ENCODE measurements at regions of chr20 and their contacts with region 1.

Region 1: DNA sequence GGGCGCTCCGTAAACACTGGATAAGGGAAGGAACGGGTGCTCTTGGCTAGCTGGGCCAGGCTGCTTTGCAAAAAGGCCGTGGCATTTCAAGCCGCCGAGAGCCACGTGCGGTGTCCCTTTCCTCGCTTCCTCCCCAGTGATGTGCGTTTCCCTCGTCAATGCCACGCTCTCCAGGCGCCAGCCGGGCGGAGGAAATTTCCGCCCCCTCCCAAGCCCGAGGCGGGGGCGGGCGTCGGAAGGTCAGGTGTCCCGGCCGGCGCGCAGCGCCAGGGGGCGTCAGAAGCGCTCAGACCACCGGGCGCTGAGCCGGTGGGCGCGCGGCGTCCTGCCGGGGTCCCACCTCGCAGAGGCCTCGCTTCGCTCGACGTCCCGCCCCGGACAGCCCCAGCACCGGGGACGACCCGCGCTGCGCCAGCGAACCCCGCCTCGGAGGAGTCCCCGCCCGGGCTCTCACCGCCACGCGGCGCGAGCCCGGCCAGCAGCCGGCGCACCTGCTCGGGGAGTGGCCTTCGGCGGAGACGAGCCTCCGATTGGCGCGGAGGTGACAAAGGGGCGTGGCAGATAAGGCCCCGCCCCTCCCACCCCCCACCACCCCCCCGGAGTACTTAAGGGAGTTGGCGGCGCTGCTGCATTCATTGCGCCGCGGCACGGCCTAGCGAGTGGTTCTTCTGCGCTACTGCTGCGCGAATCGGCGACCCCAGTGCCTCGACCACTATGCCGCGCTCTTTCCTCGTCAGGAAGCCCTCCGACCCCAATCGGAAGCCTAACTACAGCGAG is at the start of gene SNAI1:
- ATAC-seq: peak; percentile 50 to 91 (median 89)
- H3K4me3 ChIP-seq: peak within 1 kb of the TSS; percentile 35 to 50 (median 46)
- H3K27ac ChIP-seq: peak within 1 kb of the TSS in 1 of 2 donors; percentile 40
- H3K4me1 ChIP-seq: peaks cover 4 to 20% of the 10 kb centered on the region in 2 donors
- total RNA-seq, gene SNAI1: 0.66 to 5.2 (median 1.9) TPM

Region 2: GRCh38 chr20:50061742-50062516 is 79.4 kb after region 1 on chr20:
- in situ Hi-C with region 1: loop called in 2 of 9 experiments (anchors 5 to 10 kb)
- ATAC-seq: no peak
- H3K4me3 ChIP-seq: no peak overlapping the region
- H3K27ac ChIP-seq: no peak overlapping the region
- H3K4me1 ChIP-seq: peaks cover 3 to 10% of the 10 kb centered on the region in 2 donors

Region 3: DNA sequence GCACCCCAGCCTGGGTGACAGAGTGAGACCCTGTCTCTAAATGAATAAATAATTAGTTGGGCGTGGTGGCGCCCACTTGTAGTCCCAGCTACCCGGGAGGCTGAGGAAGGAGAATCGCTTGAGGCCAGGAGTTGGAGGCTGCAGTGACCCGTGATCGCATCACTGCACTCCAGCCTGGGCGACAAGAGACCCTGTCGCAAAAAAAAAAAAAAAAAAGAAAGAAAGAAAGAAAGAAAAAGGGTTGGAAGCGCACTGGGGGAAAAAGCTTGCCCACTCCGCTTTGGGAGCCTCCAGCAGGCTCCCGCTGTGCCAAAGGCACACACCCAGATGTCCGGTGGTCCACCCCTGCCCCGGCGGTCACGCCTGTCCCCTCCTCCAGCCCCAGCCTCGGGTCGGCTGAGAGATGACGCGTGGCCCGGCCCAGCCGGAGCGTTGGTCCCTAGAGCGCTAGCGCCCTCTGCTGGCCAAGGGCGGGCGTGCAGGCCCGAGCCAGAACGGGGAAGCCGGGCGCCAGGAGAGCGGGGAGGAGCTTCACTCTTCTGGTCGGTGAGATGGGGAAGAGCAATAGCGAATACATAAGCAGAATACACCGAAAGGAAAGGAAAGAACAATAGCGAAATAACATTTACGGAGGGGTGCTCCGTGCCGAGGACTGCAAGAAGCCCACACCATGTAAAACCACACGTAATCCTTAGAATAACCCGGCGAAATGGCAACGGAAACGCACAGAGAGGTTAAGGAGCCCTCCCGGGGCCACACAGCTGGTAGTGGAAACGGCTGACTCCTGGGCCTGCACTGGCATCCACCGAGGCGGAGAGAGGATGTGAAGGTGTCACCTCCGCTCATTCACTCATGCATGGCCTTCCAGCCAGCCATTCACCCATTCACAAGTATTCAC is 88.7 kb after region 1 on chr20:
- in situ Hi-C with region 1: loop called in 5 of 9 experiments (anchors 5 to 10 kb)
- ATAC-seq: peak; percentile 96 to 98 (median 96)
- H3K4me3 ChIP-seq: peak overlapping the region; percentile 21 to 39 (median 29)
- H3K27ac ChIP-seq: no peak overlapping the region
- H3K4me1 ChIP-seq: peaks cover 4 to 8% of the 10 kb centered on the region in 2 donors

Region 4: DNA sequence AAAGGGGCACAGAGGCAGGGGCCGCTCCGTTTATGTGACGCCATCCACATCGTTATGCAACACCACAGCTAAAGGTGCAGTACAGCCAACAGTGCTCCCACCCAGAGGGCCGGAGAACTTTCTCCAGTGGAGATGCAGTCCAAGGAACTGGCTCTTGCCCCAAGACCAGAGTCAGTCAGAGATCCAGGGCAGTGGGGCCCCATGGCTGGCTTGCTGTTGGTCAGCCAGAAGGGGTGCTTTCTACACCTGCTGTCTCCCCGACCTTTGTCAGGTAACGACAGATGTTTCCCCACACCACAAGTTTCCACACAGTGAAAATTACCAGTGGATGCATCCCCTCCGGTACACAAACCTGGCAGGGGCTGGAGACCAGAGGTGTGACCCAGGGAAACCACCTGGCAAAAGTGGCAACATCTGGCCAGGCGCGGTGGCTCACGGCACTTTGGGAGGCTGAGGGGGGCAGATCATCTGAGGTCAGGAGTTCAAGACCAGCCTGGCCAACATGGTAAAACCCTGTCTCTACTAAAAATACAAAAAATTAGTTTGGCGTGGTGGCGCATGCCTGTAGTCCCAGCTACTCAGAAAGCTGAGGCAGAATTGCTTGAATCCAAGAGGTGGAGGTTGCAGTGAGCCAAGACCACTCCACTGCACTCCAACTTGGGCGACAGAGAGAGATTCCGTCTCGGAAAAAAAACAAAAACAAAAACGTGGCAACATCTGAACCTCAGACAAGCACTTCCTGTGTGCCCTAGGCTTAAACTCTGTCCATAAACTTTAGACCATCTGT is 95.5 kb after region 1 on chr20:
- in situ Hi-C with region 1: loop called in 4 of 9 experiments (anchors 5 to 10 kb)
- ATAC-seq: peak in 1 of 8 experiments; percentile 12
- H3K4me3 ChIP-seq: no peak overlapping the region
- H3K27ac ChIP-seq: no peak overlapping the region
- H3K4me1 ChIP-seq: peaks cover 4 to 5% of the 10 kb centered on the region in 2 donors

Region 5: DNA sequence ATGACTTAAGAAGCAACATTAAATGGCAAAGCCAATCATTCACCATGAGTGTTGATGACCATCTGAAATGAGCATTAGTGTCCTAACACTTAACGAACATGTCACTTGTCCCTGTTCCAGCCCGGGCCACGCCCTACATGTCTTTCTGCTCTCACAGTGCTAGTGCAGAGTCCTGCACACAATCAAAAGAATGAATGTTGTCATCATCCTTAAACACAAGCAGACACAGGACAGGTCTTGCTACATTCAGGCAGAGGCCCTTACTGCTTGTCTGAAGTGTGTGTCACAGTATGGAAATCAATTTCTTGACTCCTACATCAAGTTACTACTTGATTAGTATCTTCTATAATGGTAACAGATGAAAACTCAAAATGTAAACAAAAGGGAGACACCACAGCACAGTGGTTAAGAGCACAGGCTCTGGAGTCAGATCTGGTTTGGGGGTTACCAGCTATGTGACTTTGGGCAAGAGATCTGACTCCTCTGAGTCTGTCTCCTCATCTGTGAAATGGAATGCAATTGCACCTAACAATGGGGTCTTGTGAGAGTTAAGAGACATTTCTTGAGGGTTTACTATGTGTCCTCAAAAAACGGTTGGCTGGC is 113.0 kb after region 1 on chr20:
- in situ Hi-C with region 1: no loop called
- ATAC-seq: no peak
- H3K4me3 ChIP-seq: no peak overlapping the region
- H3K27ac ChIP-seq: no peak overlapping the region
- H3K4me1 ChIP-seq: no peaks in the 10 kb centered on the region

Region 6: DNA sequence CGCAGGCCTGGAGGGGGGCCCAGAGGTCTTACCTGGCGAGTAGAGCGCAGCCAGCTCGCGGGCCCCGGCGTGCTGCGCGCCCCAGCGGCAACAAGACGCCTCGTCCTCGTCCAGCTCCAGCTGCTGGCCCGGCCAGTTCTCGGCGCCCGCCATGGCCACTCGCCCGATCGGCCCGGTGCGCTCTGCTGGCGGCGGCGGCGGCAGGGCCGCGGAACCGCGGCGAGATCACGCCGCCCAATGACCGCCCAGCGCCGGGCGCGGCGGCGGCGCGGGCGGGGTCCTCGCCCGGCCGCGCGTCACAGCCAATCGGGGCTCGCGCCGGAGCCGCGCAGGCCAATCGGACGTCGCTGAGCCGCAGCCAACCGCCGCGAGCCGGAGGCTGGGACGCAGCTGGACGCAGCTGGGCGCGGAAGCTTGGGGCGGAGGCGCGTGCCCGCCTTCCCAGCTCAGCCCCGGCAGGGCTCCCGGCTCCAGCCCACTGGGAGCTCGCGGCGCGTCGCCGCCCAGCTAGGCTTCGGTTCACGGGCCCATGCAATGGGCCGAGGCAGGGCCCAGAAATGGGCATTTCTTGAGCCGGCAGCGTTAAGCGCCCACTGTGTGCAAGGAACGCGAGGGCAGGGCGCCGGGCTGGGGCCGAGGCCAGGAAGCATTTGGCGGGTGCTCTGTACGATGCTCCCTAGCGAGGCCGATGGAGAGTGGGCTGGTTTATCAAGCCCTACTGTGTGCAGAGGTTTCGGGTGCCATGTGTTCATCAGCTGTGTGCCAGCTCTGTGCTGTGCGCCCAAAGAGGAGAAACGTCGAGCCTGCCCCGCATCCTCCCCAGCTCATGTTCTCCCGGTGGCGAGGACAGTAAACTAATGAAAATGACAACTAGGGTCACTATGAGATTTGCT is 171.2 kb after region 1 on chr20 and contains the start of gene PEDS1:
- in situ Hi-C with region 1: loop called in 1 of 9 experiments (anchors 25 kb)
- ATAC-seq: peak; percentile 88 to 98 (median 96)
- H3K4me3 ChIP-seq: peak within 1 kb of the TSS; percentile 70 to 97 (median 92)
- H3K27ac ChIP-seq: peak within 1 kb of the TSS; percentile 70 to 79
- H3K4me1 ChIP-seq: peaks cover 9 to 17% of the 10 kb centered on the region in 2 donors
- total RNA-seq, gene PEDS1: 6.9 to 43.7 (median 19.8) TPM

Measured in motor neuron (in vitro differentiated cells).